ENCODE measurements at regions of chr18 and their contacts with region 1.

Region 1: DNA sequence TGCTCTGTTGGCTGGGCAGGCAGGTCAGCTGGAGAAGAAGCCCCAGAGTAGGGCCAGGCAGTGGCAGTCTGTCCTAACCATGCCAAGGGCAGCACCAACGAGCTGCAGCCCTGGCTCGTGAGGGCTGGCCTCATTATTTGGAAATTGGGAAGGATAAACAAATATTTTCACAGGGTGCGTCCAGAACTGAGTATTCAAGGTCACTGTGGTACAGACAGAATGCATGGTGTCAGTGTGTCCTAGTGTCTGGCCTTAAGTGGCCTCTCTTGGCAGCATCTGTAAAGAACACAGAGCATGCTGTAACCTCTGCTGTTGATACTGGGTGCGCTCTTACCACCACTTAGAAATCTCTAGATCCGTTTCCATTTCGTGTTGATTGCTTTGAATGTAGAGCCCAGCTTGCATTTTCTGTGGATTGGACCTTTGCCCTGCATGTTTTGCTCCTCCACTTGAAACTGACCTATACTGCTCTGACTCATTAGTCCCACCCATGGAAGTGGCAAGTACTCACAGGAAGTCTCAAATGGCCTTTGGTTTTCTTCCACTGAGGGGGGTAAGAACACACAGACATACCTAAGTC is 88.2 kb downstream of the GREB1L start:
- DNase-seq: peak; percentile 45 to 63
- H3K4me3 ChIP-seq: no peak overlapping the region
- H3K4me3 Mint-ChIP-seq: peak overlapping the region; percentile 53
- H3K27ac Mint-ChIP-seq: peak overlapping the region; percentile 69
- H3K4me1 ChIP-seq: peaks cover 46% of the 10 kb centered on the region
- H3K4me1 Mint-ChIP-seq: peaks cover 42% of the 10 kb centered on the region
- H3K27me3 ChIP-seq: no peaks in the 10 kb centered on the region
- H3K27me3 Mint-ChIP-seq: no peaks in the 10 kb centered on the region
- CTCF ChIP-seq: no peak

Region 2: GRCh38 chr18:21315741-21316187 is 14.4 kb before region 1 on chr18:
- CTCF ChIA-PET with region 1: no interaction called
- POLR2A ChIA-PET with region 1: no interaction called
- intact Hi-C with region 1: loop called (anchors 1 kb)
- DNase-seq: peak; percentile 96 to 97
- H3K4me3 ChIP-seq: peak overlapping the region; percentile 25; the same call in 1 of the 2 replicates
- H3K4me3 Mint-ChIP-seq: peak overlapping the region; percentile 69
- H3K27ac Mint-ChIP-seq: peak overlapping the region; percentile 96
- H3K4me1 ChIP-seq: peaks cover 44% of the 10 kb centered on the region
- H3K4me1 Mint-ChIP-seq: peaks cover 36% of the 10 kb centered on the region
- H3K27me3 ChIP-seq: no peaks in the 10 kb centered on the region
- H3K27me3 Mint-ChIP-seq: no peaks in the 10 kb centered on the region
- CTCF ChIP-seq: peak in 1 of 2 experiments; percentile 19

Region 3: GRCh38 chr18:21369146-21369545 is 38.9 kb after region 1 on chr18:
- CTCF ChIA-PET with region 1: no interaction called
- POLR2A ChIA-PET with region 1: no interaction called
- intact Hi-C with region 1: loop called (anchors 5 kb)
- DNase-seq: no peak
- H3K4me3 ChIP-seq: no peak overlapping the region
- H3K4me3 Mint-ChIP-seq: peak overlapping the region; percentile 43
- H3K27ac Mint-ChIP-seq: peak overlapping the region; percentile 79
- H3K4me1 ChIP-seq: peaks cover 50% of the 10 kb centered on the region
- H3K4me1 Mint-ChIP-seq: peaks cover 32% of the 10 kb centered on the region
- H3K27me3 ChIP-seq: no peaks in the 10 kb centered on the region
- H3K27me3 Mint-ChIP-seq: no peaks in the 10 kb centered on the region
- CTCF ChIP-seq: no peak

Region 4: DNA sequence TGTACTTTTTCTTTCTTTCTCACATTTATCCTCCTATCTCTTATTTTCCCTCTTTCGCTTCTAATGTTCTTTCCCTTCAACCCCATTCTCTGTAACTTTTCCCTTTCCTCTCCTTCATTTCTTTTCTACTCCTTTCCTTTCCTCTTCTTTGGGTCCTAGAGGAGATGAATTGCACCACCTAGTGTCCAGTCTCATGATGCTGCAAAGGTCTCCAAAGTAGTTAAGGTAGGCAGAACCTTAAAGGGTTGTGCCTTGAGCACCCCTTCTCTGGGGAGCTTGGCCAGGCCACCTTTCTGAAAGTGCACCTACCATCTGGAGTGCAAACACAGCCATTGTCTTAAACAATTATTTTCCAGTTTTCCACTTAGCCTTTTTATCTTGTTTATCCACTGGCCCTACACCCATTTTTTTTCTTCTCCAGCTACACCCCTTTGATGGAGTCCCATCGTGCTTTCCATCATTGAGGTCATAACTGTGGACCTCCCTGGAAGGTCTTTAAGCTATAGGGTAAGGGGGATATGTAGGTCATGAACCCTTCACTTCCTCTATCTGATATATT is 114.3 kb after region 1 on chr18:
- CTCF ChIA-PET with region 1: no interaction called
- POLR2A ChIA-PET with region 1: no interaction called
- intact Hi-C with region 1: loop called (anchors 10 kb)
- DNase-seq: peak; percentile 50 to 61
- H3K4me3 ChIP-seq: no peak overlapping the region
- H3K4me3 Mint-ChIP-seq: no peak overlapping the region
- H3K27ac Mint-ChIP-seq: peak overlapping the region; percentile 2
- H3K4me1 ChIP-seq: peaks cover 19% of the 10 kb centered on the region
- H3K4me1 Mint-ChIP-seq: peaks cover 12% of the 10 kb centered on the region
- H3K27me3 ChIP-seq: no peaks in the 10 kb centered on the region
- H3K27me3 Mint-ChIP-seq: no peaks in the 10 kb centered on the region
- CTCF ChIP-seq: peak; percentile 78 to 89

Region 5: GRCh38 chr18:21526463-21526862 is 196.3 kb after region 1 on chr18:
- CTCF ChIA-PET with region 1: no interaction called
- POLR2A ChIA-PET with region 1: no interaction called
- intact Hi-C with region 1: no loop called
- DNase-seq: no peak
- H3K4me3 ChIP-seq: no peak overlapping the region
- H3K4me3 Mint-ChIP-seq: no peak overlapping the region
- H3K27ac Mint-ChIP-seq: no peak overlapping the region
- H3K4me1 ChIP-seq: no peaks in the 10 kb centered on the region
- H3K4me1 Mint-ChIP-seq: no peaks in the 10 kb centered on the region
- H3K27me3 ChIP-seq: no peaks in the 10 kb centered on the region
- H3K27me3 Mint-ChIP-seq: no peaks in the 10 kb centered on the region
- CTCF ChIP-seq: no peak